CD14-positive monocyte (primary cell): ENCODE measurements at regions of chr21 and their contacts with region 1.

Region 1: GRCh38 chr21:36927719-36928117 is 38.8 kb downstream of the HLCS start:
- DNase-seq: peak; percentile 23 to 47 (median 44)
- H3K4me3 ChIP-seq: no peak overlapping the region
- H3K4me3 Mint-ChIP-seq: no peak overlapping the region
- H3K27ac ChIP-seq: no peak overlapping the region
- H3K27ac Mint-ChIP-seq: no peak overlapping the region
- H3K4me1 ChIP-seq: no peaks in the 10 kb centered on the region
- H3K4me1 Mint-ChIP-seq: no peaks in the 10 kb centered on the region
- H3K27me3 ChIP-seq: no peaks in the 10 kb centered on the region
- H3K27me3 Mint-ChIP-seq: no peaks in the 10 kb centered on the region
- CTCF ChIP-seq: peak; percentile 81

Region 2: GRCh38 chr21:36419996-36420395 is 507.7 kb before region 1 on chr21:
- intact Hi-C with region 1: loop called in 1 of 2 experiments (anchors 2 kb)
- DNase-seq: peak; percentile 55 to 74 (median 74)
- H3K4me3 ChIP-seq: no peak overlapping the region
- H3K4me3 Mint-ChIP-seq: no peak overlapping the region
- H3K27ac ChIP-seq: no peak overlapping the region
- H3K27ac Mint-ChIP-seq: no peak overlapping the region
- H3K4me1 ChIP-seq: no peaks in the 10 kb centered on the region
- H3K4me1 Mint-ChIP-seq: peaks cover 8% of the 10 kb centered on the region
- H3K27me3 ChIP-seq: no peaks in the 10 kb centered on the region
- H3K27me3 Mint-ChIP-seq: peaks cover 0 to 4% (median 0%) of the 10 kb centered on the region in 3 donors
- CTCF ChIP-seq: peak; percentile 74

Region 3: GRCh38 chr21:36504067-36505058 is 423.4 kb before region 1 on chr21:
- intact Hi-C with region 1: loop called (anchors 2 to 5 kb)
- DNase-seq: peak; percentile 16 to 42 (median 37)
- H3K4me3 ChIP-seq: no peak overlapping the region
- H3K4me3 Mint-ChIP-seq: no peak overlapping the region
- H3K27ac ChIP-seq: no peak overlapping the region
- H3K27ac Mint-ChIP-seq: no peak overlapping the region
- H3K4me1 ChIP-seq: no peaks in the 10 kb centered on the region
- H3K4me1 Mint-ChIP-seq: no peaks in the 10 kb centered on the region
- H3K27me3 ChIP-seq: no peaks in the 10 kb centered on the region
- H3K27me3 Mint-ChIP-seq: peaks cover 0 to 6% (median 2%) of the 10 kb centered on the region in 3 donors
- CTCF ChIP-seq: peak; percentile 99

Region 4: GRCh38 chr21:36630485-36631206 is 297.1 kb before region 1 on chr21:
- intact Hi-C with region 1: loop called (anchors 5 kb)
- DNase-seq: peak; percentile 20 to 30 (median 23)
- H3K4me3 ChIP-seq: no peak overlapping the region
- H3K4me3 Mint-ChIP-seq: no peak overlapping the region
- H3K27ac ChIP-seq: no peak overlapping the region
- H3K27ac Mint-ChIP-seq: no peak overlapping the region
- H3K4me1 ChIP-seq: no peaks in the 10 kb centered on the region
- H3K4me1 Mint-ChIP-seq: no peaks in the 10 kb centered on the region
- H3K27me3 ChIP-seq: no peaks in the 10 kb centered on the region
- H3K27me3 Mint-ChIP-seq: peaks cover 2 to 11% (median 3%) of the 10 kb centered on the region in 3 donors
- CTCF ChIP-seq: peak; percentile 83